ENCODE measurements at regions of chr4 and their contacts with region 1.

Region 1: DNA sequence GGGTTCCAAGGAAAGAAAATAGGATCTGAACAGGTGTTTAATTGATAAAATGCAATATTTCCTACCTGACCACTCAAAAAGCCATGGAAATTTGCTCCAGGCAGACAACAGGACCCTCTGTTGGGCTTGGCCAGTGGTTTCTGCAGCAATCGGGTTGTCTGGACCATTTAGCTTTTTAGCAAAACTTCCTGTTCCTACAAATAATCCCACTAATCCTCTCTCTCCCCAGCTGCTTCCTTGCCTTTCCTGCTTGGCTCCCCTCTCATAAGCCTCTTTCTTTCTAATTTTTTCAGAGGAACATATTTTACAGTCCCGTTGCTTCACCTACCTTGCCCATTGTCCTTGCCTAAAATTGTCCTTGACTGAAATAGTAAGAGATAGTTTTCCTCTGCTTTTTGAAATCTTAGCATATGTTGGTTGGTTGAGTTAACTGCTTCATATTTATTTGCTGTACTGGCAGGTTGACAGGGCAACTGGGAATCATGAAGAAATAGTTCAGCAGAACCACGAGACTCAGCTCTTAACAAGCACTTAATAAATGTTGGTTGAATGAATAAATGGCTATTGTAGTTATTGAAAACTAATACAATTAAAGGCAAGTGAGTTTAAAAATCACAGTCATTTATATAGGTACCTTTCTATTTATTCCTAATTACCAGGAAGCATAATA is 259.8 kb downstream of the KCNIP4 start:
- DNase-seq: no peak
- H3K4me3 ChIP-seq: no peak overlapping the region
- H3K27ac ChIP-seq: no peak overlapping the region
- H3K4me1 ChIP-seq: peaks cover 0 to 4% (median 0%) of the 10 kb centered on the region in 4 donors
- H3K27me3 ChIP-seq: no peaks in the 10 kb centered on the region
- CTCF ChIP-seq: no peak
- EP300 ChIP-seq: no peak
- POLR2A ChIP-seq: no peak

Region 2: DNA sequence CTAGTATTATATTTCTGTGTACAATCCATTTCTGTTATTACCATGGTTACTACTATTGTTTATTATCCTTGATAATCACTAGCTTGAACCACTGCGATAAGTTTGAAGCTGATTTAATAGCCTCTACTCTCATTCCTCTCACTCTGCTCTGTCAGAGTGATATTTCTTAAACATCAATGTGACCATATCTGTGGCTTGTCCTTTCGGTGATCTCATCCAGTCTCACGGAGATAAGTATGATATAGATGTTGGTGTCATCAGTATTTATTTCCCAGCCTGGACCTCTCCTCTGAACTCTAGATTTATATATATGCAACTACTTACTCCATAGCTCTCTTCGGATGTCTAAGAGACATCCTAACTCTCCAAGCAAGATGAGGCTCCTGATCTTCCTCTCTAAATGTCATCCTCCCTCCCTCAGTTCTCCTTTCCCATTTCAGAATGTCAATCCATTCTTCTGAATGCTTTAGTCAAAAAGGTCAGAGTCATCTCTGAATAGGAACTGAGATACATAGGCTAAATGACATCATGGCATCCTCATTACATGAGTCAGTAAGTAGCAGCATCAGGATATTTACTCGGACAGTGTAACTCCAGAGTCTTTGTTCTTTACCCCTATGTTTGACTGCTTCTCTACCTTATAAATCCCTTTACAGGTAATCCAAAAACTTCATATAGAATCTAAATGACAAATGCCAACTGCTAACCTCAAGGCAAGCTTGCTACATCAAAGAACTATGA is 858.9 kb before region 1 on chr4:
- in situ Hi-C with region 1: no loop called
- intact Hi-C with region 1: loop called (anchors 5 kb)
- DNase-seq: no peak
- H3K4me3 ChIP-seq: no peak overlapping the region
- H3K27ac ChIP-seq: no peak overlapping the region
- H3K4me1 ChIP-seq: no peaks in the 10 kb centered on the region
- H3K27me3 ChIP-seq: no peaks in the 10 kb centered on the region
- CTCF ChIP-seq: no peak
- EP300 ChIP-seq: no peak
- POLR2A ChIP-seq: no peak

Region 3: DNA sequence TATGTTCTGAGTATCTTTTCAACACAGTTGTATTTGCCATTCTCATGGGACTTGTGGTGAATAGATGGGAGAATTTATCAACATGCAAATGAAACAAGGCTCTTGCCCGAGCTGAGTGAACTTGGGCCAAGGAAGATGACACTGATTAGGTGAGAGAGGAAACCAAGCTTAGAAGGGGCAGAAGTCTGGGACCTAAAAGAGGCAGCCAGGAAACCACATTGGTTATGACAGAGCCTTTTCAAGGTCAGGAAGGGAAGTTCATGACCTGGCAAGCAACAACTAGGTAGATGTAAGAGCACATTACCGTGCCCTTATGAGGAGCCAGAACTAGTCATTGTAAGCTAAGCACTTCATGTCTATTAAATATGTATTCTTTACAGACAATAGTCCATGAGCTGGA is 398.2 kb before region 1 on chr4:
- in situ Hi-C with region 1: no loop called
- intact Hi-C with region 1: no loop called
- DNase-seq: no peak
- H3K4me3 ChIP-seq: no peak overlapping the region
- H3K27ac ChIP-seq: no peak overlapping the region
- H3K4me1 ChIP-seq: no peaks in the 10 kb centered on the region
- H3K27me3 ChIP-seq: no peaks in the 10 kb centered on the region
- CTCF ChIP-seq: no peak
- EP300 ChIP-seq: no peak
- POLR2A ChIP-seq: no peak

Region 4: DNA sequence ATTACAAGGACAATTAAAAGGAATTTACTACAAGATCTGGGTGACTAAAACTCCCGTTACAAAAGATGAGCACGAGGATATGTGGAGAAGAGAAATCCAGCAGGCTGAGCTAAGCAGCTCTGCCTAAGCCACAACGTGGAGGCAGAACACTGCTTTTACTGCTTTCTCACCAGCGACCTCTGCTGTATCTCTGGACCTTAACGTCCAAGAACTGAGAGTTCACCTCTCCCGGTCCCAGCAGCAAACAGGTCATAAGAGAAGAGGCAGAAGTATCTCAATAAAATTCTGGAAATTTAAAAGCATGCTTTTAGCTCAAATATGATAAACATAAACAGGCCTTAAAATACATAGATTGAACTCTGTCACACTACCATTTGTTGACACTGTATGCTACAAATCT is 746.2 kb after region 1 on chr4:
- in situ Hi-C with region 1: no loop called
- intact Hi-C with region 1: no loop called
- DNase-seq: peak; percentile 30
- H3K4me3 ChIP-seq: no peak overlapping the region
- H3K27ac ChIP-seq: no peak overlapping the region
- H3K4me1 ChIP-seq: peaks cover 0 to 9% (median 4%) of the 10 kb centered on the region in 4 donors
- H3K27me3 ChIP-seq: no peaks in the 10 kb centered on the region
- CTCF ChIP-seq: peak; percentile 13 to 29 (median 26)
- EP300 ChIP-seq: no peak
- POLR2A ChIP-seq: no peak

Region 5: DNA sequence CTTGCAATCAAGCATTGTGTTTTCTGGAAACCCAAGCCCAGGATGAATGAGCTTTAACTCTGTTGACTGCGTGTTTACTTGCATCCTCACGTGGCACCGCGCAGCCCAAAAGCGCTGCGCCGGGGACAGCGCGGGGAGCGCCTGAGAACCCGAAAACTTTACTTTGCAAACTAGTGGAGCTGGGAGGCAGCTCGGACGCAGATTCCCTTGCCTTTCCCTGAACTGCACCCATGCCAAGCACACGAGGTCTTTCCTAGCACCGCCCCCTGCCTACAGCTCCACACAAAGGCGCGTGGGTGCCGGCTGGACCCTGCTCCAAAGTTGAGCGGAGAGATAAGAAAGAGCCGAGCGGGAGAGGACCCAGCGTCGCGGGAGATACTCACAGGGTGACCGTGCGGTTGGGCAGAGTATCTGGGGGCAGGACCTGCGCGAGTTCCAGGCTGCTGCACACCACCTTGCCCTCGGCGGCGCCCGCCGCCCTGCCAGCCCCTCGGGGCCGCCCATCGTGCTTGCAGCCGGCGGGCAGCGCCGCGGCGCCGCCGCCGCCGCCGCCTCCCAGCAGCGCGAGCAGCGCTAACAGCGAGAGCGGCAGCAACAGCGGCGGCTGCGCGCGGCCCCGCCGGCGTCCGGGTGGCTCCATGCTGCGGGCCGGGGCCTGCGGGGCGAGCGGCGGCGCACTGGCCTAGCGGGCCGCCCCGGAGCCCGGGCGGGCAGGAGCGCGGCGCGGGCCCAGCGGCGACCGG is 826.6 kb after region 1 on chr4:
- in situ Hi-C with region 1: no loop called
- intact Hi-C with region 1: no loop called
- DNase-seq: peak; percentile 78
- H3K4me3 ChIP-seq: peak overlapping the region; percentile 38 to 58 (median 48)
- H3K27ac ChIP-seq: peak overlapping the region; percentile 77 to 90 (median 88)
- H3K4me1 ChIP-seq: peaks cover 3 to 50% (median 19%) of the 10 kb centered on the region in 4 donors
- H3K27me3 ChIP-seq: no peaks in the 10 kb centered on the region
- CTCF ChIP-seq: peak in 2 of 5 experiments; percentile 4 to 8
- EP300 ChIP-seq: no peak
- POLR2A ChIP-seq: peak; percentile 20

Measured in transverse colon (tissue), 4 donors.